Cardiac septum (tissue), 1 donor: ENCODE measurements at regions of chr6 and their contacts with region 1.

Region 1: DNA sequence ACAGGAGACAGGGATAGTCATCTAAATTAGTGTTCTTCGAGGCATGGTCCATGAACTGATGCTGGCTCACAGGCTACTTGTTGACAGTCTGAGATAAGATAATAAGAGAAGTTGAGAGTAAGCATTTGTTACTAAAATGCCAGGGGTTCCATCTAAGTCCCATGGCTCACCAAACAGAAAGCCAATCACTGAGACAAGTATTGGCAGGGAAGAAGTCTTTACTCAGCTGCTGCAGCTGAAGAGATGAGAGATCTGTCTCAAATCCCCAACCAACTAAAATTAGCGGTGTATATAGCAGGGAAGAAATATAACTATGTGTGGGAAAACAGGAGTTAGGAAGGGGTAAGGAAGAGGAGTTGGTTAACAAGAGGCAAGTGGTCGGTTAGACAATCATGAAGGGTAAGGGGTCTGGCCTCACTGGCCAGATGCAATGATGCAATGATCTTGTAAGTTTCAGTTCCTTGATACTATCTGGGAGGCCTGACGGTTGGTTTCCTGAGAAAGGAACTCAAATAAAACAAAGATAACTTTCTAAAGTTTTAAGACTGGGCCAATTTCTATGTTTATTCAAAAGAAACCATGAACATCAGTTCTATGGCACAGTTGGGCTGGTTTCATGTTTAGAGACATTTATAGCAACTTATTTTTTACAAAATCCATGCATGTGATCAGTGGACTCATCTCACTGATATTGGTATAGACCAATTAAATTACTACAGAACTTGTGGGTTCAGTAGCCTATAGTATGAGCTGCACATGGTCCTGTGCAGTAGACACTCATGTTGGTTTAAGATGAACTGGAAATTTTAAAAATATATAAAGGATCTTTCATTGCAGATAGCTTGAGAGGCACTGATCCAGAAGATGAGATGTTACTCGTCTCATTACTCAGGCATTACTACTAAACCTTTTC is 9.9 kb upstream of the HEBP2 start:
- DNase-seq: no peak

Region 2: GRCh38 chr6:138099832-138100231 is 294.3 kb before region 1 on chr6:
- intact Hi-C with region 1: no loop called
- DNase-seq: no peak

Region 3: GRCh38 chr6:138307816-138308728 is 86.1 kb before region 1 on chr6:
- intact Hi-C with region 1: loop called (anchors 5 kb)
- DNase-seq: no peak

Region 4: GRCh38 chr6:138999954-139000725 is 606.0 kb after region 1 on chr6:
- intact Hi-C with region 1: no loop called
- DNase-seq: no peak